ENCODE measurements at regions of chr1 and their contacts with region 1.

Region 1: DNA sequence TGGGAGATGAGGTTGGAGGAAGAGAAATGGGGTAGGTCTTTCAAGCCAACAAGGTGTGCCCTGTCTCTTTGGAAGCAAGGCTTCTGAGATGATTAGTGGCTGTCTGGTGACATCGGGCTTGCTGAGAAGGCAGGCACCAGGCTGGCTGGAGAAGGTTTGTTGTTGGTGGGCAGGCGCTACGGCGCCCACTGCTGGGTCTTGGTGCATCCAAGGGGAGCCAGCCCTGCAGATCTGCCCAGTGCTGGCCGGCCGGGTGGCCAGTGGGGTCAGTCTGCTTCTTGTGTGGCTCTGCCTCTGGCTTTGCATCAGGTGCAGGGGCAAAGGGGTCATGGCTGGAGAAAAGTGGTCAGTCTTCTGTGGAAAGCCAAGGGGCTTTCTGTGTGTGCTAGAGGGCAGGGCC is 126.2 kb downstream of the TLR5 start:
- DNase-seq: no peak
- H3K4me3 ChIP-seq: no peak overlapping the region
- H3K27ac ChIP-seq: no peak overlapping the region
- H3K4me1 ChIP-seq: peaks cover 3 to 18% (median 7%) of the 10 kb centered on the region in 4 experiments
- H3K27me3 ChIP-seq: no peaks in the 10 kb centered on the region
- CTCF ChIP-seq: peak; percentile 16 to 38 (median 31); a peak in 3 of 4 replicates
- EP300 ChIP-seq: no peak
- POLR2A ChIP-seq: no peak
- RAD21 ChIP-seq: peak; percentile 25 to 34

Region 2: DNA sequence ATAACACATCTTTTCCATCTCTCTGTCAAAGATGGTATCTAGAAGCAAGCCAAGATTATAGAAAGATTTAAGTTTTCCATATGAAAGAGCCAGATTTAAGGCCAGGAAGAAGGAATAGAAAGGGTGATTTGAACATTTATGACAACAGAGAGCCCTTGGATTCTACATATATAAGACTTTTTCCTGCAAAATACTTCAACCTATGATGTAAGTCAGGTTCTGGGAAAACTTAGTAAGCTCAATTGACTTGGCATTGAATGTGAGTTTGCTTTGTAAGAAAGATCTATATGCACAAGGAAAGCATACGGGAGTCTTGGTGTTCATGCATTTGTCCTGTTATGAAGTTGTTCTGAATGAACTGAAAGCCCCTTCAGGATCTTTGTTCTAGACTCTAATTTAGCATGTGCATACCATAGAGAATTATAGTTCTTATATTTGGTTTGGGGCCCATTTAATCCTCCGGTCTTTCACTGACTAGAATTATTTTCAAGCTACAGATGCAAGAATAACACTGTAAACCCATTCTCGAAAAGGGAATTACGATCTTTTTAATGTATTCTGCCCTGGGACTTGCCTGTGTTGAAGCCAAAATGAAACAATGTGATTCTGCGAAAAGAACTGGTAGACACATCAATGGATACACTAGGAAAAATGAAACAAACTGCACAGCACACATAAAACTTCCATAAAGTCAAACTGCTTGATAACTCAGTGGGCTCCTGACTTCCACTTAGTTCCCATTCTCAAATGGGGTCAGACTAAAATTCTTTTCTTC is 49.2 kb before region 1 on chr1:
- CTCF ChIA-PET with region 1: no interaction called
- POLR2A ChIA-PET with region 1: no interaction called
- DNase-seq: no peak
- H3K4me3 ChIP-seq: no peak overlapping the region
- H3K27ac ChIP-seq: no peak overlapping the region
- H3K4me1 ChIP-seq: no peaks in the 10 kb centered on the region
- H3K27me3 ChIP-seq: no peaks in the 10 kb centered on the region
- CTCF ChIP-seq: no peak
- EP300 ChIP-seq: no peak
- POLR2A ChIP-seq: no peak
- RAD21 ChIP-seq: no peak

Region 3: DNA sequence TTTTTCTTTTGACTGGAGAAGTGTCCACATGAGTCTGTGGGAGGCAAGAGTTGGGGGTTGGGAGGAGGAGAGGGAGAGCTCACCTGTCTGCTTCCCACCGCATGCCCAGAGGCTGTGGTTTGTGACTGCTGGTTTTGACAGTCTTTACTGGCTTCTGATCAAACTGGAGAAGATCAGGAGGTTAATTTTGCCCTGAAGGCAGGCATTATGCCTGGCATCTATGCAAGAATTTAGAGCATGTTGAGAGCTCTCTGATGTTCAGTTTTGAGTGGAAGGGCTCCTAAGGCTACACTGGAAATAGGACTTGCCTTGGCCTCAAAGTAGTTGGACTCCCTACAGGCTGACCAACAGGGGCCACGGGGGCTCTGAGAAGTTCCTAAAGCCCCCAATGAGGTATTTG is 24.6 kb after region 1 on chr1:
- CTCF ChIA-PET with region 1: interaction called, 4 read pairs
- POLR2A ChIA-PET with region 1: interaction called, 53 read pairs
- DNase-seq: no peak
- H3K4me3 ChIP-seq: no peak overlapping the region
- H3K27ac ChIP-seq: no peak overlapping the region
- H3K4me1 ChIP-seq: peaks cover 0 to 7% (median 2%) of the 10 kb centered on the region in 4 experiments; a peak in 4 of 7 replicates
- H3K27me3 ChIP-seq: peaks cover 0 to 2% (median 0%) of the 10 kb centered on the region in 4 experiments; a peak in 1 of 7 replicates
- CTCF ChIP-seq: no peak
- EP300 ChIP-seq: no peak
- POLR2A ChIP-seq: no peak
- RAD21 ChIP-seq: no peak

Region 4: GRCh38 chr1:223062177-223062576 is 45.3 kb after region 1 on chr1:
- CTCF ChIA-PET with region 1: interaction called, 3 read pairs
- POLR2A ChIA-PET with region 1: interaction called, 15 read pairs
- DNase-seq: no peak
- H3K4me3 ChIP-seq: no peak overlapping the region
- H3K27ac ChIP-seq: no peak overlapping the region
- H3K4me1 ChIP-seq: no peaks in the 10 kb centered on the region
- H3K27me3 ChIP-seq: no peaks in the 10 kb centered on the region
- CTCF ChIP-seq: no peak
- EP300 ChIP-seq: no peak
- POLR2A ChIP-seq: no peak
- RAD21 ChIP-seq: no peak

Region 5: GRCh38 chr1:223074445-223075300 is 57.8 kb after region 1 on chr1:
- CTCF ChIA-PET with region 1: interaction called, 5 read pairs
- POLR2A ChIA-PET with region 1: interaction called, 43 read pairs
- DNase-seq: no peak
- H3K4me3 ChIP-seq: no peak overlapping the region
- H3K27ac ChIP-seq: no peak overlapping the region
- H3K4me1 ChIP-seq: peaks cover 4 to 11% (median 7%) of the 10 kb centered on the region in 4 experiments
- H3K27me3 ChIP-seq: no peaks in the 10 kb centered on the region
- CTCF ChIP-seq: no peak
- EP300 ChIP-seq: no peak
- POLR2A ChIP-seq: no peak
- RAD21 ChIP-seq: no peak

Region 6: GRCh38 chr1:223081181-223081994 is 64.5 kb after region 1 on chr1:
- CTCF ChIA-PET with region 1: interaction called, 7 read pairs
- POLR2A ChIA-PET with region 1: interaction called, 43 read pairs
- DNase-seq: peak; percentile 89 to 90
- H3K4me3 ChIP-seq: no peak overlapping the region
- H3K27ac ChIP-seq: no peak overlapping the region
- H3K4me1 ChIP-seq: peaks cover 0 to 2% (median under 1%) of the 10 kb centered on the region in 4 experiments; a peak in 1 of 7 replicates
- H3K27me3 ChIP-seq: peaks cover 0 to 5% (median 0%) of the 10 kb centered on the region in 4 experiments; a peak in 1 of 7 replicates
- CTCF ChIP-seq: peak; percentile 88 to 97 (median 89)
- EP300 ChIP-seq: no peak
- POLR2A ChIP-seq: no peak
- RAD21 ChIP-seq: peak; percentile 99

Region 7: GRCh38 chr1:223411309-223411708 is 394.4 kb after region 1 on chr1:
- CTCF ChIA-PET with region 1: no interaction called
- POLR2A ChIA-PET with region 1: no interaction called
- DNase-seq: no peak
- H3K4me3 ChIP-seq: no peak overlapping the region
- H3K27ac ChIP-seq: no peak overlapping the region
- H3K4me1 ChIP-seq: no peaks in the 10 kb centered on the region
- H3K27me3 ChIP-seq: no peaks in the 10 kb centered on the region
- CTCF ChIP-seq: no peak
- EP300 ChIP-seq: no peak
- POLR2A ChIP-seq: no peak
- RAD21 ChIP-seq: no peak